ENCODE measurements at regions of chr6 and their contacts with region 1.

Region 1: GRCh38 chr6:81834141-81834681 is 81.7 kb upstream of the TENT5A start:
- DNase-seq: peak; percentile 16
- H3K4me3 Mint-ChIP-seq: no peak overlapping the region
- H3K27ac Mint-ChIP-seq: no peak overlapping the region
- H3K4me1 Mint-ChIP-seq: peaks cover 39% of the 10 kb centered on the region
- H3K27me3 Mint-ChIP-seq: no peaks in the 10 kb centered on the region
- CTCF ChIP-seq: no peak

Region 2: GRCh38 chr6:81228912-81229555 is 605.2 kb before region 1 on chr6:
- CTCF ChIA-PET with region 1: no interaction called
- intact Hi-C with region 1: no loop called
- DNase-seq: no peak
- H3K4me3 Mint-ChIP-seq: no peak overlapping the region
- H3K27ac Mint-ChIP-seq: no peak overlapping the region
- H3K4me1 Mint-ChIP-seq: no peaks in the 10 kb centered on the region
- H3K27me3 Mint-ChIP-seq: no peaks in the 10 kb centered on the region
- CTCF ChIP-seq: no peak

Region 3: GRCh38 chr6:81708113-81708699 is 126.0 kb before region 1 on chr6:
- CTCF ChIA-PET with region 1: no interaction called
- intact Hi-C with region 1: no loop called
- DNase-seq: no peak
- H3K4me3 Mint-ChIP-seq: no peak overlapping the region
- H3K27ac Mint-ChIP-seq: no peak overlapping the region
- H3K4me1 Mint-ChIP-seq: no peaks in the 10 kb centered on the region
- H3K27me3 Mint-ChIP-seq: no peaks in the 10 kb centered on the region
- CTCF ChIP-seq: no peak

Region 4: DNA sequence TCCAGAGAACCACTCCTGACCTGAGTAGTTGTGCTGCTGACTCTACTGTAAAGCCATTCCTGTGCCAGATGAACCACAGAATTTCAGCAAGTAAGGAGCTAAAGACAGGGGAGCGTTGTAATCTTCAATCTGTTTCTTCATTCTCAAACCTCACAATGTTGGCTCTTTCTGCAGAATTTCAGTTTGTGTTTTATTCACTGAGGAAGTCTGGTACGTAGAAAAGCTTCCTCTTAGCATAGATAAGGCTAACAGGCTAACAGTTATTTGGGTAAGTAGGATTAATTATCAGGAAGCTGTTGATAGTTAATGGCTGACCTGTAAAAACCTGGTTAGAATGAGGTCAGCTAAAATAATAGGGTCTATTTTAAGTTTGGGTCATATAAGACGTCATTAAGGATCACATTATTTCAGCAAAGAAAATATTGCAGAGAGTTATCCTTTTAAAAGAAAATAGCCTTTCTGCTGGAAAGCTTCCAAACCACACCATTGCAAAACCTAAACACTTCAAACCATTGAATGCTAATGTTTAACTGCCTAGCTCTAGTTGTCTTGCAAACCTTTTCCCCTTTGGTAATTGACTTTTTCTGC is 67.6 kb before region 1 on chr6:
- CTCF ChIA-PET with region 1: interaction called, 6 read pairs
- intact Hi-C with region 1: loop called (anchors 2 kb)
- DNase-seq: peak; percentile 67
- H3K4me3 Mint-ChIP-seq: peak overlapping the region; percentile 29
- H3K27ac Mint-ChIP-seq: peak overlapping the region; percentile 78
- H3K4me1 Mint-ChIP-seq: peaks cover 28% of the 10 kb centered on the region
- H3K27me3 Mint-ChIP-seq: peaks cover 13% of the 10 kb centered on the region
- CTCF ChIP-seq: no peak

Region 5: GRCh38 chr6:81777586-81778268 is 56.5 kb before region 1 on chr6:
- CTCF ChIA-PET with region 1: no interaction called
- intact Hi-C with region 1: loop called (anchors 1 kb)
- DNase-seq: no peak
- H3K4me3 Mint-ChIP-seq: no peak overlapping the region
- H3K27ac Mint-ChIP-seq: no peak overlapping the region
- H3K4me1 Mint-ChIP-seq: peaks cover 34% of the 10 kb centered on the region
- H3K27me3 Mint-ChIP-seq: peaks cover 12% of the 10 kb centered on the region
- CTCF ChIP-seq: no peak

Region 6: DNA sequence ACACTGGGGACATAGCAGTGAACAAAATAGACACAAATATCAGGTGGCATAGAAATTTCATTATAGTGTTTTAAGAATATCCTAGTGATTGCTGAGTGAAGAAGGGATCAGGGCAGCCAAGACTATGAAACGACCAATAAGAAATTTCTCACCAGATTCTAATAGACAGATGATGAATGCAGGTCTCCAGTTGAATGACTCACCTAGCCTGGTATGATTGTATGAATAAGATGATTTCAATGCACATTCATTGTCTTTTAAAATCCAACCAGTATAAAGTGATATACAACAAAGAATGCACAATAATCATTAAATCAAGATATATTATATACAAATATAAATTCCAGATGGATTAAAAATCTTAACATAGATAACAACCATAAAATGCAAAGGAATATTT is 42.8 kb after region 1 on chr6:
- CTCF ChIA-PET with region 1: no interaction called
- intact Hi-C with region 1: no loop called
- DNase-seq: no peak
- H3K4me3 Mint-ChIP-seq: no peak overlapping the region
- H3K27ac Mint-ChIP-seq: no peak overlapping the region
- H3K4me1 Mint-ChIP-seq: peaks cover 9% of the 10 kb centered on the region
- H3K27me3 Mint-ChIP-seq: no peaks in the 10 kb centered on the region
- CTCF ChIP-seq: no peak

Region 7: DNA sequence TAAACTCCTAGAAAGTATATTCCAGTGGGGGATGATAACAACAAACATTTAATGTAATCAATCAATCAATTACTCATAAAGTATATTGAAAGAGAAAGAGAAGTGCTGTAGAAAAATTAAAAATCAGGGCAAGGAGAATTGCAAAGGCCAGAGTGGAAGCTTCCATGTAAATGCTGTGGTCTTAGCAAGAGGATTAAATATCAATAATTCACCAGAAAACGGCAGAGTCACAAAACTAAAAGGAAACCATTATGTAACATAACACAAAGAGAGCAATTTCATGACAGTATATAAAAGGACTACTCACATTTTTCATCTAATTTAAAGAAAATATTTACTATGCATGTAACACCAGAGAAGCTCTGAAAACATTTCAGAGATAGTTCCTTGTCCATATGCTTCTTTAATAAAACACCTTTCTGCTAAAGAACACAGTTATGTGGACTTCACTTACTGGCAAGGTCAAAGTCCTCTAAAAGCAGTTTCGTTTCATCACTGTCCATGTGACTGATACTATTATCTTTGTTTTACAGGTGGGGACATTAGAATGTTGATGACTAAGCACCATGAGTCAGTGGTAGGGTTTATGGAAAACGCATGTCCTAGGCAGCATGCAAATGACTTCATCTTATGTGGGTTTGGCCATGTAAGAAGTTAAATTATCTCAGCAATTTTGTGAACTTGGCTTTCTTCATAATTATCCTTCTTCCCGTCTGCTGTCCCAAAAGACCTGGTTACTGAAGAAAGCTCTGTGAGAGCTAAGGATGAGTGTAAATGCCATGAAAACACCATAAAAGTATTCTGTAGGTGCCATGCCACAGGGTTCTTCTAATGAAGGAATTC is 104.0 kb after region 1 on chr6:
- CTCF ChIA-PET with region 1: no interaction called
- intact Hi-C with region 1: loop called (anchors 5 kb)
- DNase-seq: peak; percentile 58
- H3K4me3 Mint-ChIP-seq: peak overlapping the region; percentile 62
- H3K27ac Mint-ChIP-seq: peak overlapping the region; percentile 98
- H3K4me1 Mint-ChIP-seq: peaks cover 55% of the 10 kb centered on the region
- H3K27me3 Mint-ChIP-seq: no peaks in the 10 kb centered on the region
- CTCF ChIP-seq: no peak

Region 8: DNA sequence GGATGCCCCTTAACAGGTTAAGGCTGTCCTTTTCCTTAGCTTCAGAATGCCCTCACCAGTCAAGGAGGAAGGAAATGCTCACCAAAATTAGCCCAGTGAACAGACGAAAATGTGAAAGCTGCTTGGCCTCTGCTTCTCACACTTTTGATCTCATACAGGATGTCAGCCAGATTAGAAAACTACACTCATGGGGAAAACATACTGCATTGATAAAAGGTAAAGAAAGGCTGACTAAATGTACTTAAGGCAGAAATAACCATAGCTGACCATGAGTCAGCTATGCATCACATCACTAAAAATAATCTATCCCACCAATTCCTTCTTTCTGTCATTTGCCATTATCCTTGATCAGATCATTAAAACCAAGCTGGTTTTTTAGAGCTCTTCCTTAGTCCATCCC is 116.7 kb after region 1 on chr6:
- CTCF ChIA-PET with region 1: no interaction called
- intact Hi-C with region 1: no loop called
- DNase-seq: no peak
- H3K4me3 Mint-ChIP-seq: no peak overlapping the region
- H3K27ac Mint-ChIP-seq: no peak overlapping the region
- H3K4me1 Mint-ChIP-seq: peaks cover 12% of the 10 kb centered on the region
- H3K27me3 Mint-ChIP-seq: no peaks in the 10 kb centered on the region
- CTCF ChIP-seq: no peak